GM12878 (cell line): ENCODE measurements at regions of chr15 and their contacts with region 1.

Region 1: DNA sequence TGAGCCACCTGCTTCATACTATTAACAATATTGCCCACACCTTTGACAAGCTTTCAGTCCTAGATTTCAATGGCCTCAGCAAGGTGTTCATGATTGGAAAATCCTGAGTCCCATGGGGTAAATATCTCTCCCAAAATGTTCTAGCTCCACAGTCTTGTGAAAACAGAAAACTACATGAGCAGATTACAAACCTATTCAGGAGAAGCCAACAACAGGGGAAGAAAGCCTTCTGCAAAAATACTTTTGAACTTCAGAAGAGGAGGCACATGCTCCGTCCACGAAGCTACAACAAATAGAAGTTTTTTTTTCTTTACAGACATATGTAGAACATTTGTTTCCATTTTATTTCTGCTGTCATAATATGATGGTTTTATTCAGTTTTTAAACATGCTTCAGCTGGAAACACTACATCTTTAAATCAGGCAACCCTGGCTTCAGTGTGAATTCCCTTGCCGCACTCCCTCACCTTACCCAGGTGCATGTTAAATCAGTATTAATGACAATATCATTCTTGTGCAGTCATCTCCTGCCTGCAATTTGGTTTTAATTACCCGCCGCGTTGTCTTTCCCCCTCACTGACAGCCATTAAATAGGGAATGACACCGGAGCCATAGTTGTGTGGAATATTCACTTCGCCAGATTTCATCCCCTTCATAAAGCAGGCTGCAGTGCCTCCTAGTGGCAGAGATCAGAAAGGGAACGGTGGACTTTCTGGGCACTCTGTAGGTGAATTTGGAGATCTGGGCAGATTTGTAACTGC is 725.5 kb upstream of the ARRDC4 start:
- DNase-seq: no peak
- ATAC-seq: peak; percentile 79
- H3K4me3 ChIP-seq: no peak overlapping the region
- H3K27ac ChIP-seq: no peak overlapping the region
- H3K4me1 ChIP-seq: no peaks in the 10 kb centered on the region
- H3K27me3 ChIP-seq: no peaks in the 10 kb centered on the region
- CTCF ChIP-seq: peak; percentile 66 to 74 (median 73)
- EP300 ChIP-seq: no peak
- POLR2A ChIP-seq: no peak
- RAD21 ChIP-seq: peak; percentile 84

Region 2: GRCh38 chr15:96494505-96494904 is 740.5 kb before region 1 on chr15:
- CTCF ChIA-PET with region 1: interaction called, 33 read pairs
- POLR2A ChIA-PET with region 1: no interaction called
- RAD21 ChIA-PET with region 1: interaction called, 7 read pairs
- SMC1A ChIA-PET with region 1: interaction called, 12 read pairs
- in situ Hi-C with region 1: no loop called
- intact Hi-C with region 1: loop called (anchors 5 kb)
- DNase-seq: no peak
- ATAC-seq: no peak
- H3K4me3 ChIP-seq: no peak overlapping the region
- H3K27ac ChIP-seq: no peak overlapping the region
- H3K4me1 ChIP-seq: no peaks in the 10 kb centered on the region
- H3K27me3 ChIP-seq: no peaks in the 10 kb centered on the region
- CTCF ChIP-seq: no peak
- EP300 ChIP-seq: no peak
- POLR2A ChIP-seq: no peak
- RAD21 ChIP-seq: no peak

Region 3: GRCh38 chr15:96893159-96893906 is 341.7 kb before region 1 on chr15:
- CTCF ChIA-PET with region 1: interaction called, 5 read pairs
- POLR2A ChIA-PET with region 1: no interaction called
- RAD21 ChIA-PET with region 1: interaction called, 7 read pairs
- SMC1A ChIA-PET with region 1: interaction called, 8 read pairs
- in situ Hi-C with region 1: no loop called
- intact Hi-C with region 1: loop called (anchors 10 kb)
- DNase-seq: no peak
- ATAC-seq: peak; percentile 79
- H3K4me3 ChIP-seq: no peak overlapping the region
- H3K27ac ChIP-seq: no peak overlapping the region
- H3K4me1 ChIP-seq: no peaks in the 10 kb centered on the region
- H3K27me3 ChIP-seq: no peaks in the 10 kb centered on the region
- CTCF ChIP-seq: peak; percentile 16 to 69 (median 56); a peak in 5 of 6 replicates
- EP300 ChIP-seq: no peak
- POLR2A ChIP-seq: no peak
- RAD21 ChIP-seq: peak; percentile 34; the same call in 1 of the 2 replicates

Region 4: DNA sequence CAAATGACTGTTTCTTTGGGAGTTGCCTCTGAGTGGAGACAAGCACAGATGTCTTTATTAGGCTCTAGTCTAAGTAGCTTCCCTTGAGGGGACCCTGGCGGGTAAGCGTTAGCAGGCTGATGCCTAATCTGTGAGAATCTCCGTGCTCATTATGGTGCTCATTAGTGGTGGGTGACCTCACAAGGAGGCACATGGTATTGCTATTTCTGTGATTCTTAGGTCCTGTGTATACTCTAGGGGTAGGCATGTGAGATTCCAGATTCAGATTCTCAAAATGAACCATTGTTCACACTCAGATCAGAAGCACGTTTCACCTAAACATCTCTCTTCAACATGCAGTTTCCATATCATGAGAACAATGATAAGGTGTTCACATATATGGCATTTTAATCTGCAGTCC is 94.8 kb before region 1 on chr15:
- CTCF ChIA-PET with region 1: interaction called, 6 read pairs
- POLR2A ChIA-PET with region 1: interaction called, 4 read pairs
- RAD21 ChIA-PET with region 1: interaction called, 8 read pairs
- SMC1A ChIA-PET with region 1: interaction called, 9 read pairs
- in situ Hi-C with region 1: no loop called
- intact Hi-C with region 1: loop called (anchors 5 kb)
- DNase-seq: no peak
- ATAC-seq: peak; percentile 71
- H3K4me3 ChIP-seq: no peak overlapping the region
- H3K27ac ChIP-seq: no peak overlapping the region
- H3K4me1 ChIP-seq: no peaks in the 10 kb centered on the region
- H3K27me3 ChIP-seq: no peaks in the 10 kb centered on the region
- CTCF ChIP-seq: no peak; a peak in 1 of 6 replicates
- EP300 ChIP-seq: no peak; a peak in 1 of 4 replicates
- POLR2A ChIP-seq: no peak
- RAD21 ChIP-seq: no peak

Region 5: GRCh38 chr15:97212276-97212675 is 22.8 kb before region 1 on chr15:
- CTCF ChIA-PET with region 1: interaction called, 6 read pairs
- POLR2A ChIA-PET with region 1: interaction called, 3 read pairs
- RAD21 ChIA-PET with region 1: interaction called, 12 read pairs
- SMC1A ChIA-PET with region 1: interaction called, 31 read pairs
- in situ Hi-C with region 1: no loop called
- intact Hi-C with region 1: no loop called
- DNase-seq: no peak
- ATAC-seq: no peak
- H3K4me3 ChIP-seq: no peak overlapping the region
- H3K27ac ChIP-seq: no peak overlapping the region
- H3K4me1 ChIP-seq: no peaks in the 10 kb centered on the region
- H3K27me3 ChIP-seq: no peaks in the 10 kb centered on the region
- CTCF ChIP-seq: no peak
- EP300 ChIP-seq: no peak
- POLR2A ChIP-seq: no peak
- RAD21 ChIP-seq: no peak

Region 6: DNA sequence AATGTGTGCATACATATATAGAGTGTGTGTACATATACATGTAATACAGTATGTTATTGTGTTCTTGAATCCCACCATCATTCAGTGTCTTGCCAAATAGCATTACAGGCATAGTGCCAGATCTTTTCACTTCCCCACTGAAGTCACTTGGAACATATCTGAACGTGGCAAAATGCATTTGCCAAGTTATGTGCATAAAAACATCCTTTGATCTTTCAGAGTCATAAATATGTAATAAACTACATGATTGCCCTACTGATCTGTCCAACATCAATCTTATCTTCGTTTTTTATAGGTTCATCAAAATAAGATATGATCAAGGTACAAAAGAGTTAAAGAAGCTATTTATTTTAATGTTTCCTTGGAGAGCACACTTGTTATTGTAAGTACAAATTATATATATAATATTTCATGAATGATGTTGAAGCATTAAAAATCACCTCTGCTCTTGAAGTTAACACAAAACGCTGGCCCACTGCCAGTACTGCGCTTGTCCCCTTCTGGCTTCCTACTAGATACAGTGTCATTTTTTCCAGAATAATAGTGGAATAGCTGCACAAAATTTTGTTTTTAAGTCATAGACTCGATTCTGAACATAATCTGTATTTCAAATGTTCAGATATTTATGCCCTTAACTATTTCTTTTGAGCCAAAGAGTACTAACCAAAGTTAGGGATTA is 176.0 kb after region 1 on chr15:
- CTCF ChIA-PET with region 1: no interaction called
- POLR2A ChIA-PET with region 1: no interaction called
- RAD21 ChIA-PET with region 1: no interaction called
- SMC1A ChIA-PET with region 1: no interaction called
- in situ Hi-C with region 1: no loop called
- intact Hi-C with region 1: no loop called
- DNase-seq: no peak
- ATAC-seq: no peak
- H3K4me3 ChIP-seq: no peak overlapping the region
- H3K27ac ChIP-seq: no peak overlapping the region
- H3K4me1 ChIP-seq: no peaks in the 10 kb centered on the region
- H3K27me3 ChIP-seq: no peaks in the 10 kb centered on the region
- CTCF ChIP-seq: no peak
- EP300 ChIP-seq: no peak
- POLR2A ChIP-seq: no peak
- RAD21 ChIP-seq: no peak

Region 7: DNA sequence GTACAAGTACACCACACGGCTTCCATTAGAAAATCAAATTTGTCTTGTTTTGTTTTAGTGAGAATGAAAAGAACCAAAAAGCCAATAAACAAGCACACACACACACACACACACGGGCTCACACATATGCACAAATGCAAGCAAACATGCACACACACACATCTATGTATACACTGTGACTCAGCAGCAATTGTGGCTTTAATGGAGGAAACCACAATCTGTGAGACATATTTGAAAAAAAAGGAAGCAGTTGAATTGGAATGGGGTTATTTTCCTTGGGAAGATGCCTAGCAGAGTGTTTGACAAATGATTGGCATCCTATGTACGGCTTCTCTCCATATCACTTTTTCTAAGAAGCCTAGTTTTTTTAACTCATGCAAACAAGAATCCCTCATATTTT is 524.3 kb after region 1 on chr15:
- CTCF ChIA-PET with region 1: interaction called, 3 read pairs
- POLR2A ChIA-PET with region 1: no interaction called
- RAD21 ChIA-PET with region 1: no interaction called
- SMC1A ChIA-PET with region 1: no interaction called
- in situ Hi-C with region 1: no loop called
- intact Hi-C with region 1: loop called (anchors 5 kb)
- DNase-seq: no peak
- ATAC-seq: no peak
- H3K4me3 ChIP-seq: no peak overlapping the region
- H3K27ac ChIP-seq: no peak overlapping the region
- H3K4me1 ChIP-seq: no peaks in the 10 kb centered on the region
- H3K27me3 ChIP-seq: no peaks in the 10 kb centered on the region
- CTCF ChIP-seq: no peak
- EP300 ChIP-seq: no peak
- POLR2A ChIP-seq: no peak
- RAD21 ChIP-seq: no peak